K562 (cell line): ENCODE measurements at regions of chr2 and their contacts with region 1.

Region 1: DNA sequence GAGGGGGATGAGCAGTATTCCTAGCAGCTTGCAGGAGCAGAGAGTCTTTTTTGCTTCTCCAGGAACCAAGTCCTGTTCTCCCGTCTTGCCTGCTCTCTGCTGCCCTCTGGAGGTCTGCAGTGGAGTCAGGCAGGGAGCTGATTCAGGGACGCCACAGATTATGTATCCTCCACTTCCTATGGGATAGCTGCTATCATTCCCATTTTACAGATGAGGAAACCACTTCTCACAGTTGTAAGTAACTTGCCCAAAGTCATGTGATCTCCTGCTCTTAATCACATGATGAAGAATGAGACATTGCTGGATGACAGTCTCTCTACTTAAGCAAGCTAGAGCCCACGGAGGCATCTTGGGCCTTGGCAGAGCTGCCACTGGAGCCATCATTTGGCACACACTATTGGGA is 8.3 kb downstream of the SLC4A5 start:
- DNase-seq: peak; percentile 70 to 79 (median 74)
- ATAC-seq: peak; percentile 92
- H3K4me3 ChIP-seq: no peak overlapping the region
- H3K27ac ChIP-seq: no peak overlapping the region
- H3K4me1 ChIP-seq: no peaks in the 10 kb centered on the region
- H3K27me3 ChIP-seq: no peaks in the 10 kb centered on the region; a peak in 1 of 5 replicates
- CTCF ChIP-seq: peak; percentile 87 to 90 (median 88)
- EP300 ChIP-seq: no peak
- POLR2A ChIP-seq: no peak
- RAD21 ChIP-seq: peak; percentile 80 to 90

Region 2: DNA sequence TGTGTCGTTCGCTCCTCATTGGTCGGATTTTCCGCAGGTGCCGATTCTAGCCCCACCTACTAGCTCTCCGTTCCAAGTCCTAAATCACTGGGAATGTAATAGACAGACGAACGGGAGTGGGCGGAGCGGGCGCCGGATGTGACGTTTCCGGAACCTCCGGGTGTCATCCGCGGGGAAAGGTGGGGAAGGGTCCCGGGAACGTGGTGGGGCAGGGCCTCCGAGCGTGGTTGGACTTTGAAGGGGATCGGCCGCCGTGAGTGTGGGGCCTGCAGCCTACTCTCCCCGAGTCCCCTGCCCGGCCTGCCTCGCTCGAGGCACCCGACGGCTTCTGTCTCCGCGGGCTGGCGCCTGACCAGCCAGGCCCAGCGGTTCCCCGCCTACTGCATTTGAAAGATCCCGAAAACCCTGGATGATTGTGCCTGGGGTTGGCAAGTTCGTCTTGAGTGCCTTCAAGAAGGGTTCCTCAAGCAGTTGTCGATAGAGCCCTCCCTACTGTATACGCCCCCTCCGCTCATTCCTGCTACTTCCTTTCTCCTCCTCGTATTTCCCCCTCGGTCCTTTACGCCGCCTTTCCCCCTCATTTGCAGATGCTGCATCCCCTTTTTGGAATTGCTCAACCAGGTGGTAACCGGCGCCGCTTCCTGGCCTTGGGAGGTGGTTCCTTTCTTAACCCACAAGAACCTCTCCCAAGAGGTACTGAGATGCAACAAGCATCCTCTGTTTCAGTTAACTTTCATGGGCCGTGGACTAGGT is 505.9 kb before region 1 on chr2 and contains the start of gene STAMBP:
- CTCF ChIA-PET with region 1: no interaction called
- POLR2A ChIA-PET with region 1: no interaction called
- in situ Hi-C with region 1: no loop called
- intact Hi-C with region 1: loop called (anchors 10 kb)
- DNase-seq: peak; percentile 95 to 98 (median 96)
- ATAC-seq: peak; percentile 95
- H3K4me3 ChIP-seq: peak within 1 kb of the TSS; percentile 62
- H3K27ac ChIP-seq: peak within 1 kb of the TSS; percentile 89
- H3K4me1 ChIP-seq: peaks cover 7 to 13% of the 10 kb centered on the region in 2 experiments; a peak in 4 of 5 replicates
- H3K27me3 ChIP-seq: no peaks in the 10 kb centered on the region
- CTCF ChIP-seq: no peak
- EP300 ChIP-seq: no peak
- POLR2A ChIP-seq: peak; percentile 89
- RAD21 ChIP-seq: no peak
- polyA plus RNA-seq, gene STAMBP: 50.1 to 75.2 TPM

Region 3: DNA sequence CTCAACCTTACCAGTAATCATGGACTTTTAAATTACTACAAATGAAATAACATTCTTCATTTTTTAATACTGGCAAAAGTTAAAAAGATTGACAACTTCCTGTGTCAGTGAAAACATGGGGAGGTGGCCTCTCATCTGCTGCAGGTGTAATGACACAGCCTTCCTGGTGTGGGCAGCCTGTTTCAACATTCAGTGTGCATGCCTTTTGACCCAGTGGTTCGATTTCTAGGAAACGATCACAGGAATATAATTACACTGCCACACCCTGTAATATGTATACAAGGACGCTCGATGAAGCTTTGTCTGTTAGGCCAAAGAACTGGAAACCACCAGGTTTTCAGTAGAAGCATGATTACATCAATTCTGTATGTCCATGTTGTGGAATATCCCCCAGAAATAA is 67.9 kb before region 1 on chr2:
- CTCF ChIA-PET with region 1: interaction called, 11 read pairs
- POLR2A ChIA-PET with region 1: no interaction called
- in situ Hi-C with region 1: loop called (anchors 5 kb)
- intact Hi-C with region 1: no loop called
- DNase-seq: peak; percentile 61 to 74 (median 67)
- ATAC-seq: peak; percentile 92
- H3K4me3 ChIP-seq: no peak overlapping the region
- H3K27ac ChIP-seq: no peak overlapping the region
- H3K4me1 ChIP-seq: peaks cover 6 to 9% of the 10 kb centered on the region in 2 experiments; a peak in 3 of 5 replicates
- H3K27me3 ChIP-seq: no peaks in the 10 kb centered on the region
- CTCF ChIP-seq: peak; percentile 71 to 80 (median 72)
- EP300 ChIP-seq: 0 out of 2 replicates have a peak, but pooled peaks have one; percentile 20
- POLR2A ChIP-seq: no peak
- RAD21 ChIP-seq: peak; percentile 72 to 87

Region 4: GRCh38 chr2:74399785-74400184 is 64.9 kb after region 1 on chr2:
- CTCF ChIA-PET with region 1: interaction called, 7 read pairs
- POLR2A ChIA-PET with region 1: no interaction called
- in situ Hi-C with region 1: no loop called
- intact Hi-C with region 1: loop called (anchors 2 kb)
- DNase-seq: peak; percentile 54 to 65 (median 58)
- ATAC-seq: peak; percentile 93
- H3K4me3 ChIP-seq: no peak overlapping the region
- H3K27ac ChIP-seq: no peak overlapping the region
- H3K4me1 ChIP-seq: no peaks in the 10 kb centered on the region
- H3K27me3 ChIP-seq: no peaks in the 10 kb centered on the region
- CTCF ChIP-seq: peak; percentile 65 to 80 (median 69)
- EP300 ChIP-seq: no peak
- POLR2A ChIP-seq: no peak
- RAD21 ChIP-seq: peak; percentile 61 to 78

Region 5: DNA sequence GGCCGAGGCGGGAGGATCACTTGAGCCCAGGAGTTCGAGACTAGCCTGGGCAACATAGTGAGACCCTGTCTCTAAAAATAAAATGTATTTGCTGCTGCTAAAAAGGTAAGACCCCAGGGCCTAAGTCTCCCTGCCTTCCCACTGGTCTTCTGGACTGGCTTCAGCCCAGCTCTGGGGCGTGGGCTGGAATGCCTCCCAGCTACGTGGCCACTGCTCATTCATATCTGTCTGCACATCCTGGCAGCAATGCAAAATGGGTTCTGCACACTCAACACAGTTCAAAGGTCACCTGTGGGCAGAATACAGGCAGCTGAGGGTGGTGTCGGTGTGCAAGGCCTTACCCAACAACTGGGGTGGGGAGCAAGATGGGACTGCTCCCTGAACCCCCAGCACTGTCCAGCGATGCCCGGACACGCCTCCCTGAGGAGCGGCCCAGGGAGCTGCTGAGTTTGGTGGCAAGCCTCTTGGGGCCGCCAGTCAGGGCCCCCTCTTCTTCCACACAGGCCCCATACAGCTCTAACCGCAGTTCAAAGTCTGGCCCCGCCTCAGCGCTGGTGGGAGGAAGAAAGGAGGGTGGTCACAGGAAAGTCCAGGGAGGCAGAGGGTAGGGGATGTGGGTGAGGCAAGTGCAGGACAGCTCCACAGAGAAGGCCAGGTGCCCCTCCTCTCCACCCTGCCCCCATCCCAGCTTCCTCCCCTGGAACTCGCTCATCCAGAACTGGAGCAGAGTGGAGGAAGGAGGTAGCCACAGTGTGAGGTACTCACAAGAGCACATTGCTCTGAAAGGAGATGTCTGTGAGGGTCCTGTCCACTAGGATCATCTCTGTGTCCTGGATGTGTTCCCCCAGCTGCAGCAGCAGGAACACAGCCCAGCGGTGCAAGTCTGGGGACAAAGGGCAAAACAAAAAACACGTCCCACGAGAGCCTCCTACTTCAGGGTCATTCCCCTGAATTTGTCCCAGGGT is 94.8 kb after region 1 on chr2:
- CTCF ChIA-PET with region 1: no interaction called
- POLR2A ChIA-PET with region 1: no interaction called
- in situ Hi-C with region 1: no loop called
- intact Hi-C with region 1: no loop called
- DNase-seq: no peak
- ATAC-seq: no peak
- H3K4me3 ChIP-seq: no peak overlapping the region
- H3K27ac ChIP-seq: no peak overlapping the region
- H3K4me1 ChIP-seq: peaks cover 0 to 16% of the 10 kb centered on the region in 2 experiments; a peak in 1 of 5 replicates
- H3K27me3 ChIP-seq: no peaks in the 10 kb centered on the region
- CTCF ChIP-seq: no peak
- EP300 ChIP-seq: no peak
- POLR2A ChIP-seq: no peak
- RAD21 ChIP-seq: no peak

Region 6: DNA sequence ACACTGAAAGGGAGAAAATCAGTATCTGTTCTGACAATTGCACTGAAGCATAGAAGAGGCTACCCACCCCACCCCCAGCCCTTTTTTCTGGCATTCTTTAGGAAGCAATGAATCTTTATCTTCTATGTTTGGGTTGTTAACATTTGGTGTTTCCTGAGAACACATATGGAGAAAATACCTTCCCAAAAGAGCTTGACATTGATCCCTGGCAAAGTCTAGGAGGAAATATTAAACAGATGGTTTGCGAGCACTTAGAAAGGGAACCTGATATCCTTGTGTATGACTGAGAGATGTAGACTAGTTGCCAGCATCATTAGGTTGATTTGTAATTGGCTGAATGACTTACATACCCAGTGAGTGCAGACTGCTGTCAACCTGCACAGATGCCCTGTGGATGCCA is 262.5 kb after region 1 on chr2:
- CTCF ChIA-PET with region 1: no interaction called
- POLR2A ChIA-PET with region 1: no interaction called
- in situ Hi-C with region 1: no loop called
- intact Hi-C with region 1: loop called (anchors 5 kb)
- DNase-seq: no peak
- ATAC-seq: no peak
- H3K4me3 ChIP-seq: no peak overlapping the region
- H3K27ac ChIP-seq: no peak overlapping the region
- H3K4me1 ChIP-seq: peaks cover 0 to 6% of the 10 kb centered on the region in 2 experiments; a peak in 3 of 5 replicates
- H3K27me3 ChIP-seq: peaks cover 0 to 2% of the 10 kb centered on the region in 2 experiments; a peak in 1 of 5 replicates
- CTCF ChIP-seq: no peak
- EP300 ChIP-seq: no peak
- POLR2A ChIP-seq: no peak
- RAD21 ChIP-seq: no peak